Activated naive CD4-positive, alpha-beta T cell treated with anti-CD3 and anti-CD28 coated beads for 36 hours (primary cell): ENCODE measurements at regions of chr22 and their contacts with region 1.

Region 1: GRCh38 chr22:19419464-19420178 is 11.9 kb downstream of the HIRA start:
- DNase-seq: peak; percentile 71
- H3K4me3 Mint-ChIP-seq: no peak overlapping the region
- H3K27ac Mint-ChIP-seq: peak overlapping the region; percentile 81
- H3K4me1 Mint-ChIP-seq: peaks cover 56% of the 10 kb centered on the region
- H3K27me3 Mint-ChIP-seq: no peaks in the 10 kb centered on the region

Region 2: DNA sequence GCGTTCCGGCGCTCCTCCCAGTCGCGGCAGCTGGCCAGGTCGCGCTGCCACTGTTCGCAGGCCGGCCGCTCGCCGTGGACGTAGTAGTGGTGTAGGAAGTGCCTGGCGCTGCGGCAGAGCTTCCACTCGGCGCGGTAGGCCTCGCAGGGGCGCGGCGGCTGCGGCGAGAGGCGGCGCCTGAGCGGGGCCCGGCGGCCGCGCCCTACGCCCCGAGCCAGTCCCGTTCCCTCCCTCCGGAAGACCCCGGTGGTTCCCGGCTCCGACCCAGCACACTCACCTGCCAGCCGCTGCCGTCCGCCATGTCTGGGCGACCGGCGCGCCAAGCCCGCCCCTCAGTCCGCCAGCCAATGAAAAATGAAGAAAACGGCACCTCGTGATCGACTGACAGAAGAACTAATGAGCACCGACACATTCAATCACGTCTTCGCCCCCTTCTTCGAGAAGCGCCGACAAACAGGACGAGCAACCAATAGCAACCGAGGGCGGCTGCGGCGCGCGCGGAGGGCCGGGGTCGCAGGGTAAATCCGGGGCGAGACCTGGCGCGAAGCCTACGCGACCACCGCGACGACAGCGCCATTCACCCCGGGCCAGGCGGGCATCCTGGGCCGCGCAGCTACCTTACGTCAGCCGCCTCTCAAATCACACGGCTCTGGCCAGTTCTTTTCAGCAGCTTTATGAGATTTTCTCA is 27.9 kb after region 1 on chr22 and contains the start of gene C22orf39:
- CTCF ChIA-PET with region 1: interaction called, 3 read pairs
- intact Hi-C with region 1: loop called (anchors 1 kb)
- DNase-seq: peak; percentile 93
- H3K4me3 Mint-ChIP-seq: peak within 1 kb of the TSS; percentile 86
- H3K27ac Mint-ChIP-seq: peak within 1 kb of the TSS; percentile 90
- H3K4me1 Mint-ChIP-seq: peaks cover 46% of the 10 kb centered on the region
- H3K27me3 Mint-ChIP-seq: no peaks in the 10 kb centered on the region
- total RNA-seq, gene C22orf39: 29.3 to 30.2 TPM

Region 3: DNA sequence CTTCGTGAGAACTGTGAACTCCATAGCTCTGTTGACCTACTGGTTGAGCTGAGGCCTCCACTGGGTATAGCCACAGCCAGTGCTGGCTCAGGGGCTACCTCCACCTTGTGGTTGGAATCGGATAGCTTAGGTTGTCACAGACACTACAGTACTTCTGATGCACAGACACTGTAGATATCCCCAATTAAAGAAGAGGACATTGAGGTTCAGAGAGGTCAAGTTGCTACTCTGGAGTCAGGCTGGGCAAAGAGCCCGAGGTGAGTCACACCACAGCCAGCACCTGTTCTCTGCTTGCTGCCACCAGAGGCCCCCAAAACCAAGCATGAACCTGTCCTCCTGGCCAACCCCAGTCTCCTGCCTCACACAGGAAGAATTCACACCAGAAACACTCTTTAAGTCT is 54.0 kb after region 1 on chr22:
- CTCF ChIA-PET with region 1: no interaction called
- intact Hi-C with region 1: no loop called
- DNase-seq: no peak
- H3K4me3 Mint-ChIP-seq: no peak overlapping the region
- H3K27ac Mint-ChIP-seq: no peak overlapping the region
- H3K4me1 Mint-ChIP-seq: peaks cover 21% of the 10 kb centered on the region
- H3K27me3 Mint-ChIP-seq: no peaks in the 10 kb centered on the region